Esophagus muscularis mucosa (tissue), 4 donors: ENCODE measurements at regions of chr6 and their contacts with region 1.

Region 1: DNA sequence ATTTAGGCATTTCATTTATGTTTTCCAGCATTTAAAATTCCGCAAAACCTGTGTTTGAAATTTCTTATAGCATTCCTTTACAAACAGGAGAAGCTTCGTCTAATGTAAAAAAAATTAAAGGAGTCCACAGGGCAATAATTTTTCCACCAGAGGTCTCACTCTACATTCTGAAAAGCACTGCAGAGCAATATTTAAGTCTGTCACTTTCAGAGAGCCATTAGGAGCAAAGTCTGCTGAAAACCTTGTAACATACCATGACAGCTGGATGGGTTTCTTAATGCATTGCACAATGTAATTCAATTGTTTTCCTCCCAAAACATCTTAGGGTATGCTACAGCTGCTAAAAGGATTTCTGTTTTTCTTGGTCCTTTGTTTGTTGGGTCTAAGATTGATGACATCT is 18.0 kb downstream of the BAG2 start:
- DNase-seq: no peak
- H3K4me3 ChIP-seq: no peak overlapping the region
- H3K27ac ChIP-seq: peak overlapping the region in 2 of 4 donors; percentile 15 to 42
- H3K4me1 ChIP-seq: peaks cover 0 to 14% (median 12%) of the 10 kb centered on the region in 4 donors
- H3K27me3 ChIP-seq: no peaks in the 10 kb centered on the region
- CTCF ChIP-seq: peak; percentile 49 to 57 (median 54)
- EP300 ChIP-seq: no peak
- POLR2A ChIP-seq: no peak

Region 2: DNA sequence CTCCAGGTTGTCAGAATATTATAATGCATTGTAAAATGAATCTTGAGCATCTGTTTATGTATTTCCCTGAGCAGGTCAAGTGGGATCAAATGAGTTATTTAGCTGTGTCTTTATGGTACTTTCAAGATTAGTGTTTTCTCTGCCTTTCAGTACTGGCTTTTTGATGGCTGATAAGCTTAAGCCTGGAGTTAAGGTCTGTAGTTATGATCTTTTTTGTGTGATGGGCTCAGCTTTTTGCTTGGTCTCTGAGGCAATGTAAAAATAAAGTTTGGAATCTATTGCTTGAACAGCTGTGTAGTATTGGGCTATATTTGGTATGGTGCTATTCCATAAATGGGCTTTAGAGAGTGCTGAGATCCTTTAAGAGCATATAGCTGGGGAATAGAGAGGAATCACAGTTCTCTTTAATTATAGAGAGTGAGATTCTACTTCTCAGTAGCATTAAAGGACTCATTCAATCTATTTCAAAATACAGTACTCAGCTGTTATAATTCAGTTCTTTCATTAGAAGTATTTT is 59.4 kb before region 1 on chr6:
- intact Hi-C with region 1: no loop called
- DNase-seq: no peak
- H3K4me3 ChIP-seq: no peak overlapping the region
- H3K27ac ChIP-seq: no peak overlapping the region
- H3K4me1 ChIP-seq: peaks cover 9 to 14% (median 11%) of the 10 kb centered on the region in 4 donors
- H3K27me3 ChIP-seq: no peaks in the 10 kb centered on the region
- CTCF ChIP-seq: no peak
- EP300 ChIP-seq: no peak
- POLR2A ChIP-seq: no peak

Region 3: GRCh38 chr6:57221936-57222742 is 32.0 kb after region 1 on chr6 and contains the start of gene RAB23:
- intact Hi-C with region 1: loop called (anchors 5 kb)
- DNase-seq: peak; percentile 93
- H3K4me3 ChIP-seq: peak within 1 kb of the TSS; percentile 81 to 97 (median 91)
- H3K27ac ChIP-seq: peak within 1 kb of the TSS; percentile 91 to 96 (median 94)
- H3K4me1 ChIP-seq: peaks cover 6 to 34% (median 30%) of the 10 kb centered on the region in 4 donors
- H3K27me3 ChIP-seq: no peaks in the 10 kb centered on the region
- CTCF ChIP-seq: no peak
- EP300 ChIP-seq: no peak
- POLR2A ChIP-seq: peak; percentile 88
- total RNA-seq, gene RAB23: 57.8 to 102 (median 70.3) TPM